ENCODE measurements at regions of chr21 and their contacts with region 1.

Region 1: GRCh38 chr21:38805328-38806152 is at the start of gene ETS2:
- DNase-seq: peak; percentile 92 to 94
- H3K4me3 ChIP-seq: peak within 1 kb of the TSS; percentile 71
- H3K4me1 ChIP-seq: peaks cover 25% of the 10 kb centered on the region
- H3K27me3 ChIP-seq: no peaks in the 10 kb centered on the region

Region 2: DNA sequence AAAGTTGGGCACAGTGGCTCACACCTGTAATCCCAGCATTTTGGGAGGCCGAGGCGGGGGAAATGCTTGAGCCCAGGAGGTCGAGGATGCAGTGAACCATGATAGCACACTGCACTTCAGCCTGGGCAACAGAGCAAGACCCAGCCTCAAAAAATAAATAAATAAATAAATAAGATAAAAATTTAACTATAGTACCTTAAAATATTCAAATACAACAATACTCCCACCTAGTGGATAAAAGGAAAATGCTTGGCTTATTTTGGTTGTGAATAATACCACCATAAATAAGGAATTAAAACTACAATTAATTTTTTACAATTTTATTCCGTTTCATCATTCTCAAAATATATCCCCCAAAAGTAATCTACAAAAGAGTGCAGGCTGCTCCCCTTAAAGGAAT is 369.6 kb after region 1 on chr21:
- in situ Hi-C with region 1: loop called (anchors 10 kb)
- DNase-seq: peak in 1 of 2 experiments; percentile 28
- H3K4me3 ChIP-seq: no peak overlapping the region
- H3K4me1 ChIP-seq: 0 out of 2 replicates have a peak, but pooled peaks cover 2% of the 10 kb centered on the region
- H3K27me3 ChIP-seq: no peaks in the 10 kb centered on the region

Region 3: GRCh38 chr21:39388038-39388810 is 582.7 kb after region 1 on chr21:
- in situ Hi-C with region 1: loop called (anchors 25 kb)
- DNase-seq: peak; percentile 78 to 96
- H3K4me3 ChIP-seq: peak overlapping the region; percentile 29
- H3K4me1 ChIP-seq: peaks cover 10% of the 10 kb centered on the region
- H3K27me3 ChIP-seq: no peaks in the 10 kb centered on the region

Measured in HAP-1 (cell line).